ENCODE measurements at regions of chr3 and their contacts with region 1.

Region 1: DNA sequence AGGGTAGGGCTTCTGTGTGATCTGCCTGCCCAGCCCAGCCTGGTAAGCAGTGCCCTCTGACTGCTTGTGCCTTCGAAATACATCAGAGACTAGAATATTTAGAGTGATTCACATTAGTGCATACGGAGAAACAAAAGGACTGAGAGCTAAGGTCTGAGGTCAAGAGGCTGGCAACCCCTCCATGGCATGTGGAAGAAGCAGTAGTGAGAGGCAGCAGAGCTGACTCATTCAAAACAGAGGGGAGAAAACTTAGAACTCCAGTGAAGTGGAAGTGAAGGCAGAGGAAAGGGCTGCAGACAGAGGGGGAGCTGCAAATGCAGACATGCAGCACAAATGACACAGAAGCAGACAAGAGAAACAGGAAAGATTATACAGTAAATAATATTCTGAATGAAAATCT is 61.6 kb downstream of the ULK4 start:
- DNase-seq: no peak
- CTCF ChIP-seq: no peak

Region 2: DNA sequence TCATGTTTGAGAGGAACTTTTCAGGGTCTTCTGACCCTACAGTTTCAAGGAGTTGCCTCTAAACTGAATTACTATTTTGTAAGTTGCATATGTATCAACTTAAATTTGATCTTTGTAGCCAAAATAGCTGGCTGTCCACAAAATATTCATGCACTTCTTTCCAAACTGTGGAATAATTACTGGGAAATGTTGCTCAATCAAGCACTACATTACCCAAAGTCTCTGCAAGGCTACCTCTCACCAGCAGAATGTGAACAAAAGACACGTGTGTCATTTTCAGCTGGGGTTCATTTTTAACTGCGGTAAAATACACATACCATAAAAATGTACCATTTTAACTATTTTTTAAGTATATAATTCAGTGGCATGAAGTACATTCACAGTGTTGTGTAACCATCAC is 380.5 kb before region 1 on chr3:
- in situ Hi-C with region 1: no loop called
- DNase-seq: no peak
- CTCF ChIP-seq: no peak

Region 3: GRCh38 chr3:42090973-42091731 is 190.9 kb after region 1 on chr3 and contains the start of gene TRAK1:
- in situ Hi-C with region 1: loop called (anchors 10 kb)
- DNase-seq: no peak
- CTCF ChIP-seq: no peak

Region 4: GRCh38 chr3:42443819-42444436 is 543.7 kb after region 1 on chr3:
- in situ Hi-C with region 1: loop called (anchors 25 kb)
- DNase-seq: peak; percentile 83
- CTCF ChIP-seq: peak; percentile 94

Measured in GM13976 (cell line).